ENCODE measurements at regions of chr1 and their contacts with region 1.

Region 1: DNA sequence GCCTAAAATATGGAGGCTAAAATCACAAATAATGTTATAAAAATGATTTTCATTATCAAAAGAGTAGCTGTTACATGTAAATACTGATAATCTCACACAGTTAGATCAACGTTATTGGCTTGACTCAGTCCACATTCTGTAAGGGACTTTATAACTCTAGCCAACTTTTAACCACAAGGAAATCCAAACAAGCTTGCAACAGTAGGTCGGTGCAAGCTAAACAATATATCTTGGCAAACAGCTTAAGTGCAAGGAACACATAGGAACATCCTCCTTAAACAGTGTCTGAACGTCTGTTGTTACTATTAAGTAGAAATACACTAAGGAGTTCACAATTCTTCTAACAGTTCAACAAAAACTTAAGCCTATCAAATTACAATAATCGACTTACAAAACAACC is 126.7 kb downstream of the EIF4G3 start:
- DNase-seq: peak; percentile 51
- ATAC-seq: peak; percentile 87
- H3K4me3 ChIP-seq: no peak overlapping the region
- H3K27ac ChIP-seq: no peak overlapping the region
- H3K4me1 ChIP-seq: peaks cover 9% of the 10 kb centered on the region
- H3K27me3 ChIP-seq: no peaks in the 10 kb centered on the region
- CTCF ChIP-seq: no peak

Region 2: GRCh38 chr1:20992322-20993056 is 57.5 kb before region 1 on chr1:
- CTCF ChIA-PET with region 1: no interaction called
- POLR2A ChIA-PET with region 1: no interaction called
- intact Hi-C with region 1: loop called (anchors 10 kb)
- DNase-seq: no peak
- ATAC-seq: no peak
- H3K4me3 ChIP-seq: no peak overlapping the region
- H3K27ac ChIP-seq: no peak overlapping the region
- H3K4me1 ChIP-seq: no peaks in the 10 kb centered on the region
- H3K27me3 ChIP-seq: no peaks in the 10 kb centered on the region
- CTCF ChIP-seq: no peak